WTC11 (cell line): ENCODE measurements at regions of chr6 and their contacts with region 1.

Region 1: GRCh38 chr6:30219244-30219643 is 6.0 kb upstream of the TRIM26 start:
- DNase-seq: peak; percentile 44
- ATAC-seq: peak; percentile 81
- H3K4me3 Mint-ChIP-seq: no peak overlapping the region
- H3K27ac Mint-ChIP-seq: no peak overlapping the region
- H3K4me1 Mint-ChIP-seq: peaks cover 15% of the 10 kb centered on the region
- H3K27me3 Mint-ChIP-seq: peaks cover 32% of the 10 kb centered on the region
- CTCF ChIP-seq: peak; percentile 28; the same call in 1 of the 2 replicates

Region 2: DNA sequence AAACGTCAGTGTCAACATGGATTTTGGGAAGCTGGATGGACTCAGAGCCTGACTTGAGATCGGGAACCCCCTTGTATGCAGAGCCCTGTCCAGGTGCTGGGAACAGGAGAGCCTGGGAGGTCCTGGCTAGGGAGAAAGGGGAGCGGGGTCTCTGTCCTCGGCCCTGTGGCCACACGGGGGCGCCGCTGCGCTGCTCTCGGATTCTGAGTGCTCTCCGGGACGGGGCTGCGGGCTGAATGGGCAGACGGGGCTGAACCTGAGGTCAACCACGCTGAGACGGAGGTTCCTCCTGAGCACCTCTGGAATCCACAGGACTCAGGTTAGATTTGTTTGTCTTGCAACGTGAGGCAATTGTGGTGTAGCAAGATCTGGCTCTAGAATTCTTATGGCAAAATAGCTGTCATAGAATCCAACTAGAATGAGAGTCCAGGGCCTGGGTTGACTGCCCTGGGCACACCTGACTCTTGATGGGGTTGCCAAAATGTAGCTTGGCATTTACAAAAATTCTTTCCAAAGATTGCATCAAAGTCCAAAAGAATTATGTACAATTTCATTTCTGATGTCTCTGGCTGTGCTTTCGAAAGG is 516.6 kb before region 1 on chr6:
- CTCF ChIA-PET with region 1: no interaction called
- POLR2A ChIA-PET with region 1: no interaction called
- DNase-seq: peak; percentile 92
- ATAC-seq: peak; percentile 96
- H3K4me3 Mint-ChIP-seq: no peak overlapping the region
- H3K27ac Mint-ChIP-seq: no peak overlapping the region
- H3K4me1 Mint-ChIP-seq: peaks cover 5% of the 10 kb centered on the region
- H3K27me3 Mint-ChIP-seq: peaks cover 12% of the 10 kb centered on the region
- CTCF ChIP-seq: peak; percentile 66

Region 3: DNA sequence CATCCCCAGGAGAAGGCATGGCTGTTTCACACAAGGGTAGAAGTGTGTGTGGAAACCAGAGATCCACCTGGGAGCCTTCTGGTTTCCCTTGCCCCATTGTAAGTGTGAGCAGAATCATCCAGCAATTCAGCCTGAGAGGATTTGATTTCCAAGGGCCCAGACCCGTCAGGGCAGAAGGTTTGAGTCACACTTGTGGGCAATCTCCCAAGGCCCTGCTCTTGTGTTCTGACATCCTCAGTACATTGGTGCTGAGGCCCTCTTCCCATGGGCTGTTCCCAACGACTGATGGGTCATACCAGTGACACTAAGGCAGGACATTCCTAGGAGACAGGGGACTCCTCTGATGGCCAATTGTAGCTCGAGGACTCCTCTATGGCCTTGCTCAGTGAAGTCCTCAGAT is 216.4 kb before region 1 on chr6:
- CTCF ChIA-PET with region 1: no interaction called
- POLR2A ChIA-PET with region 1: no interaction called
- DNase-seq: no peak
- ATAC-seq: no peak
- H3K4me3 Mint-ChIP-seq: no peak overlapping the region
- H3K27ac Mint-ChIP-seq: no peak overlapping the region
- H3K4me1 Mint-ChIP-seq: peaks cover 7% of the 10 kb centered on the region
- H3K27me3 Mint-ChIP-seq: peaks cover 60% of the 10 kb centered on the region
- CTCF ChIP-seq: no peak

Region 4: GRCh38 chr6:30113003-30113759 is 106.1 kb before region 1 on chr6 and contains the start of gene TRIM31:
- CTCF ChIA-PET with region 1: no interaction called
- POLR2A ChIA-PET with region 1: no interaction called
- DNase-seq: no peak
- ATAC-seq: no peak
- H3K4me3 Mint-ChIP-seq: no peak within 1 kb of the TSS
- H3K27ac Mint-ChIP-seq: no peak within 1 kb of the TSS
- H3K4me1 Mint-ChIP-seq: no peaks in the 10 kb centered on the region
- H3K27me3 Mint-ChIP-seq: peaks cover 62% of the 10 kb centered on the region
- CTCF ChIP-seq: no peak
- total RNA-seq, gene TRIM31: 0.11 to 0.16 TPM (median 0.13 TPM) in 3 replicates

Region 5: GRCh38 chr6:30206799-30207618 is 12.2 kb before region 1 on chr6:
- CTCF ChIA-PET with region 1: interaction called, 14 read pairs
- POLR2A ChIA-PET with region 1: no interaction called
- DNase-seq: no peak
- ATAC-seq: peak; percentile 79
- H3K4me3 Mint-ChIP-seq: peak overlapping the region; percentile 12
- H3K27ac Mint-ChIP-seq: peak overlapping the region; percentile 93; the same call in 1 of the 2 replicates
- H3K4me1 Mint-ChIP-seq: peaks cover 72% of the 10 kb centered on the region
- H3K27me3 Mint-ChIP-seq: peaks cover 3% of the 10 kb centered on the region; the same call in 1 of the 2 replicates
- CTCF ChIP-seq: no peak

Region 6: DNA sequence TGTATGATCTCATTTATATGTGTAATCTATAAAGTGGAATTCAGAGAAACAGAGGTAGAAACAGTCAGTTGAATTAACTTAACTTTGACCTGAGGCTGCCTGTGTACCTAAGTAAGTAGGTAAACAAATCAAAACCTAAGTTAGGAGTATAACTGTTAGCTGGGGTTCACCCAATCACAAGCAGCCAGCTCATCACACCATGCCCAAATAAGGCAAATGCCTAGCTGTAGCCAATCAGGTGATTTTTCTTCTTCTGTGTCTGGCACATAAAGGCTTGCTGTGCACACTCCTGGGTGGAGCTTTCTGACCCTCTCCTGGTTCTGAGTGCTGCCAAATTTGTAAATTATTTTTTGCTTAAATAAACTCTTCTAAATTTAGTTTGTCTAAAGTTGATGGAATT is 52.8 kb after region 1 on chr6:
- CTCF ChIA-PET with region 1: no interaction called
- POLR2A ChIA-PET with region 1: no interaction called
- DNase-seq: no peak
- ATAC-seq: no peak
- H3K4me3 Mint-ChIP-seq: no peak overlapping the region
- H3K27ac Mint-ChIP-seq: no peak overlapping the region
- H3K4me1 Mint-ChIP-seq: no peaks in the 10 kb centered on the region
- H3K27me3 Mint-ChIP-seq: peaks cover 12% of the 10 kb centered on the region
- CTCF ChIP-seq: no peak